ENCODE measurements at regions of chr13 and their contacts with region 1.

Region 1: DNA sequence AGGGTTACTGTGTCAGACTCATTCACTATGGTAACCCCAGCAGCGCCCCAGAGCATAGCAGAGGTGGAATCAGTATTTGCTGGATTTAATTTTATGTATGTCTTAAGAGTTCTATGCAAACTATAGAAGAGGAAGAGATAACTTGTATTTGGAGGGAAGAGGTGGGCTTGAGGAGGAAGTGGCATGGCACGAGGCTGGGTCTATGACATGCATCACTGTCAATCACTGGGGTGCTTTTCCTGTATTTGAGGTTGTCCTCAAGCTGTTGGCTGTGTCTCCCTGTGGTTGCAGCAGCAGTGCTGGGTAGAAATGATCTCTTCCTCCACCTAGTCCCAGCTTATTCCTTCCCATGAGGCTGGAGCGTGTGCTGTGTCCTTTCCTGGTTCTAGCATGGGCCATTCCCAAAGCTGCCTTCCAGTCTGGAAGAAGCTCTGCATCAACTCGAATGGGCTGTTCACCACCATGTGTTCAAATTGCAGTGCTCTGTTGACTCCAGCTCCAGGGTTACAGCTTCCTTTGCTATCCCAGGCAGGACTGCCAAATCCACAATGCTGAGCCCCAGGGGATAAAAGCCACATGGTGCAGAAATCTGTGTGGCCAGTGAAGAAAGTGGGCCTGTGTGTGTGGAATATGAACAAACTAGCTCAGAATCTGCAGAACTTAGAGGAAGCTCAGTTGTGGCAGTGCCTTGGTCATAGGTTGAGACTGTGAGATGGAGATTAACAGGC is 73.1 kb upstream of the MTIF3 start:
- DNase-seq: no peak
- H3K4me3 ChIP-seq: no peak overlapping the region
- H3K27ac ChIP-seq: no peak overlapping the region
- H3K4me1 ChIP-seq: no peaks in the 10 kb centered on the region
- H3K27me3 ChIP-seq: peaks cover 4% of the 10 kb centered on the region
- CTCF ChIP-seq: no peak
- POLR2A ChIP-seq: no peak

Region 2: GRCh38 chr13:27635266-27635665 is 111.8 kb after region 1 on chr13:
- intact Hi-C with region 1: no loop called
- DNase-seq: no peak
- H3K4me3 ChIP-seq: no peak overlapping the region
- H3K27ac ChIP-seq: no peak overlapping the region
- H3K4me1 ChIP-seq: peaks cover 26 to 53% of the 10 kb centered on the region in 2 donors
- H3K27me3 ChIP-seq: no peaks in the 10 kb centered on the region
- CTCF ChIP-seq: no peak
- POLR2A ChIP-seq: no peak

Region 3: DNA sequence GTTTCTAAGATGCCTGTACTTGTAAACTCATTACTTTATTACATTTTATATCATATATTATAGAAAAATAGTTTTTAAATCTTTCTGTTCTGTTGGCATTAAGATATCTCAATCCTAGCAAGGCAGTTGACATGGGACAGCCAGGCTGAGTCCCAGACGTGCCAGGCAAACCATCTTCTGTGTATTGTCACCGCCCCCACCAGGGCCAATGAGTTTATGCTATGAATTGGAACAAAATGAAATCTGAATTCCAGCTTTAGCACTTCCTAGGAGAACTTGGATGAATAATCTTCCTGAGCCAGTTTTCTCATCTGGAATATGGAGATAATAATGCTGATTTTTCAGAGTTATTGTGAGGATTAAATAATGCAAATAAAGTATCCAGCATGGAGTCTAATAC is 188.9 kb after region 1 on chr13:
- intact Hi-C with region 1: loop called in 1 of 2 experiments (anchors 10 kb)
- DNase-seq: peak; percentile 32 to 78 (median 60)
- H3K4me3 ChIP-seq: no peak overlapping the region
- H3K27ac ChIP-seq: no peak overlapping the region
- H3K4me1 ChIP-seq: no peaks in the 10 kb centered on the region
- H3K27me3 ChIP-seq: no peaks in the 10 kb centered on the region
- CTCF ChIP-seq: peak in 5 of 6 experiments; percentile 12 to 61 (median 38)
- POLR2A ChIP-seq: no peak